Activated CD4-positive, alpha-beta T cell treated with anti-CD3 and anti-CD28 coated beads for 36 hours (primary cell): ENCODE measurements at regions of chr19 and their contacts with region 1.

Region 1: DNA sequence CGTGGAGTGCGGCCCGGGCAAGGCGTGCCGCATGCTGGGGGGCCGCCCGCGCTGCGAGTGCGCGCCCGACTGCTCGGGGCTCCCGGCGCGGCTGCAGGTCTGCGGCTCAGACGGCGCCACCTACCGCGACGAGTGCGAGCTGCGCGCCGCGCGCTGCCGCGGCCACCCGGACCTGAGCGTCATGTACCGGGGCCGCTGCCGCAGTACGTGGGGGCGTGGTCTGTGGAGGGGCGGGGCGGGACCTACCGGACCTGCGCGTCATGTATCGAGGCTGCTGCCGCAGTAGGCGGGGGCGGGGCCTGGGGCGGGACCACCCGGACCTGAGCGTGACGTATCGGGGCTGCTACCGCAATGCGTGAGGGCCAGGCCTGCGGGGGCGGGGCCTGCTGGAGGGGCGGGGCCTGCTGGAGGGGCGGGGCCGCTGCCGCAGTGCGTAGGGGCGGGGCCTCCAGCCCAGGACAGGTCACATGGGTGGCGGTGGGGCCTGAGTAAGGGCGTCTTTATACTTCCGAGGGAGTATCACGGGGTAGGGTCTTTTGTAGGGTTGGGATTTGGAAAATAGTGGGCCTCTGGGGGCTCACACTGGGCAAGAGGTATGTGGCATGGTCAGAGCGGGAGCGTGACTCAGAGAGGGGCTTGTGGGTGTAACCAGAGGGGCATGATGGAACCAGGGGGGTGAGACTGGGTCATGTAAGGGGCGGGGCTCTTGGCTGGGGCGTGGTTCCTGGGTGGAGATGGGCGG is 4.3 kb downstream of the FSTL3 start:
- DNase-seq: peak; percentile 100
- ATAC-seq: peak; percentile 81
- H3K4me3 Mint-ChIP-seq: peak overlapping the region; percentile 70
- H3K27ac Mint-ChIP-seq: peak overlapping the region; percentile 94
- H3K4me1 Mint-ChIP-seq: peaks cover 3% of the 10 kb centered on the region
- H3K27me3 Mint-ChIP-seq: peaks cover 4% of the 10 kb centered on the region

Region 2: GRCh38 chr19:572140-572742 is 108.2 kb before region 1 on chr19 and contains the start of gene BSG:
- CTCF ChIA-PET with region 1: no interaction called
- POLR2A ChIA-PET with region 1: no interaction called
- intact Hi-C with region 1: loop called in 1 of 2 experiments (anchors 1 kb)
- DNase-seq: peak; percentile 99
- ATAC-seq: peak; percentile 87
- H3K4me3 Mint-ChIP-seq: peak within 1 kb of the TSS; percentile 90
- H3K27ac Mint-ChIP-seq: peak within 1 kb of the TSS; percentile 95
- H3K4me1 Mint-ChIP-seq: peaks cover 36% of the 10 kb centered on the region
- H3K27me3 Mint-ChIP-seq: no peaks in the 10 kb centered on the region
- total RNA-seq, gene BSG: 165 to 175 TPM

Region 3: GRCh38 chr19:645641-646478 is 34.6 kb before region 1 on chr19:
- CTCF ChIA-PET with region 1: no interaction called
- POLR2A ChIA-PET with region 1: no interaction called
- intact Hi-C with region 1: no loop called
- DNase-seq: no peak
- ATAC-seq: peak; percentile 11
- H3K4me3 Mint-ChIP-seq: no peak overlapping the region
- H3K27ac Mint-ChIP-seq: no peak overlapping the region
- H3K4me1 Mint-ChIP-seq: no peaks in the 10 kb centered on the region
- H3K27me3 Mint-ChIP-seq: no peaks in the 10 kb centered on the region

Region 4: DNA sequence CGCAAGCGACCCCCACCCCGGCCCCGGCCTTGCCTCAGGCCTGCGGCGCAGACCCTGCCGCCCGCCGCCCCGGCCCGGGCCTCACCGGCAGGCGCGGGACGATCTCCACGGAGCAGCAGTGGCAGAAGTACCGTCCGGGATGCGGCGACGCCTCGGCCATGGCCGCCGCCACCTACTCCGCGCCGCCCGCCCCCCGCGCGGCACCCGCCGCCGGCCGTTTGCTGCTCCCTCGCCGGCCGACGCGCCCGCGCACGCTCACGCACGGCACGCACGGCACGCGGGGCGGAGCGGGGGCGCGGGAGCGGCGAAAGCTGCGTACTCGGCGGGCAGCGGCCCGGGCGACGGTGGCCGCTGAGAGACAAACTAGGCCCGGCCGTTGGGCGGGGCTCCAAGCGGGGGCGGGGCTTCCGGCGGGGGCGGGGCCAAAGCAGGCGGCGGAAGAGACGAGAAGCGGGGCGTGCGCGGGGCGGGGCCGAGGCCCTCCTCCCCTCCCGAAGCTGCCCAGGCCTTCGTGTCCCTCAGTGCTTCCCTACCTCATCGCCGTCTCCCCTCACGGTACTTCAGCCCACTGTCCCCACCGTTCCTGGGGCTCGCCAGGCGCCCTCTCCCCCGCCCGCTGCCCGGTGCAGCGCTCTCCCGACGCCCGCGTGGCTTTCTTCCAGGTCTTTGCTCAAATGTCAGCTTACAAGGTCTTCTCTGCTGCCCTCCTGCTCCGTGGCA is 17.3 kb before region 1 on chr19 and contains the start of gene RNF126:
- CTCF ChIA-PET with region 1: interaction called, 11 read pairs
- POLR2A ChIA-PET with region 1: interaction called, 7 read pairs
- intact Hi-C with region 1: loop called (anchors 1 kb)
- DNase-seq: peak; percentile 98
- ATAC-seq: peak; percentile 49
- H3K4me3 Mint-ChIP-seq: peak within 1 kb of the TSS; percentile 96
- H3K27ac Mint-ChIP-seq: peak within 1 kb of the TSS; percentile 95
- H3K4me1 Mint-ChIP-seq: peaks cover 37% of the 10 kb centered on the region
- H3K27me3 Mint-ChIP-seq: no peaks in the 10 kb centered on the region
- total RNA-seq, gene RNF126: 83.0 to 91.3 TPM

Region 5: DNA sequence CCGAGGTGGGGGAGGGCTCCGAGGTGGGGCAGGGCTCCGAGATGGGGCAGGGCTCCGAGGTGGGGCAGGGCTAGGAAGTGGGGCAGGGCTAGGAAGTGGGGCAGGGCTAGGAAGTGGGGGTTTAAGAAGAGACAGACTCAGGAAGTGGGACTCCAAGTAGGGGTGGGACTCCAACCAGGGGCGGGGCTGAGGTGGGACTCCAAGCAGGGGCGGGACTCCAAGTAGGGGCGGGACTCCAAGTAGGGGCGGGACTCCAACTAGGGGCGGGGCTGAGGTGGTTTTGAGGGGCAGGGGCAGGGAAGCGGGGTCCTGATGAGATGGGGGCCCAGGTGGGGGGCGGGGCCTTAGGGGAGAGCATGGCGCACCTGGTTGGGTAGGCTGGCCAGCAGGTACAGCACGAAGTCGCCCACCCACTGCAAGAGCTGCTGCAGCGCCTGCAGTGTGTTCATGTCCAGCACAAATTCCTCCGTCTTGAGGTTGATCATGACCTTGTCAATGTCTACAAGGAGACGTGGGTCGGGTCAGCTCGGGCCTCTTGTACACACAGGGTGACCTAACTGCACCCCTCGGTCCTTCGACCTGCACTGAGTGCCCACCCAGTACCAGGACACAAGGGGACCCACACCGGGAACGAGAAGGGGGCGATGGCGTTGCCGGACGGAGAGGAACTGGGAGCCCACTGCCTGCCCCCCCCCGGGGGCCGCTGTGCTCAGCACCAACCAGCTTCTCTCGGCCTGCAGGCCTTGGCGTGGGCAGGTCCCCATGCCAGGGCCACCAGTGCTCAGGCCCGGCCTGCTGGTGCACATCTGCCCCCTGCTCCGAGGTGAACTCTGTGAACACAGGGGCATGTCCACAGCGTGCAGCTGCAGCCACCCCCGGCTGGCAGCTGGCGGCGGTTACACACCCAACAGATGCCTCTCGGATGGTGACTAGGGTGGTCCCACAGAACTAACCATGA is 192.9 kb after region 1 on chr19:
- CTCF ChIA-PET with region 1: no interaction called
- POLR2A ChIA-PET with region 1: no interaction called
- intact Hi-C with region 1: loop called in 1 of 2 experiments (anchors 1 kb)
- DNase-seq: peak; percentile 85
- ATAC-seq: peak; percentile 89
- H3K4me3 Mint-ChIP-seq: no peak overlapping the region
- H3K27ac Mint-ChIP-seq: no peak overlapping the region
- H3K4me1 Mint-ChIP-seq: peaks cover 12% of the 10 kb centered on the region
- H3K27me3 Mint-ChIP-seq: no peaks in the 10 kb centered on the region

Region 6: DNA sequence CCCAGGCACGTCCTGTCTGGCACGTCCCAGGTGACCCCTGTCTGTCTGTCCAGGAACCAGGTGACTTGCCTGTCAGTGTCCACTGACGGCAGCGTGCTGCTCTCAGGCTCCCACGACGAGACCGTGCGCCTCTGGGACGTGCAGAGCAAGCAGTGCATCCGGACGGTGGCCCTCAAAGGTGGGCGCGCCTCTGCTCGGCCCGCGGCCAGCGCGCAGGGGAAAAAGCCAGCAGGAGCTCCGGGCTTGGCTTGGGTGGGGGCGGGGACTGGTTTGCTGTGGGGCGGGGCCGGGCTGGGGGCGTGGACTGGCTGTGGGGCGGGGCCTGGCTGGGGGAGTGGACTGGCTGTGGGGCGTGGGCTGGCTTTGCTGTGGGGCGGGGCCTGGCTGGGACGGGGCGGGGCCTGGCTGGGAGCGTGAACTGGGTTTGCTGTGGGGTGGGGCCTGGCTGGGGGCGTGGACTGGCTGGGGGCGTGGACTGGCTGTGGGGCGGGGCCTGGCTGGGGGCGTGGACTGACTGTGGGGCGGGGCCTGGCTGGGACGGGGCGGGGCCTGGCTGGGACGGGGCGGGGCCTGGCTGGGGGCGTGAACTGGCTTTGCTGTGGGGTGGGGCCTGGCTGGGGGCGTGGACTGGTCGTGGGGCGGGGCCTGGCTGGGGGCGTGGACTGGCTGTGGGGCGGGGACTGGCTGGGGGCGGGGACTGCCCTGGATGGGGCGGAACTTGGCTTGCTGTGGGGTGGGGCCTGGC is 310.9 kb after region 1 on chr19:
- CTCF ChIA-PET with region 1: no interaction called
- POLR2A ChIA-PET with region 1: no interaction called
- intact Hi-C with region 1: loop called in 1 of 2 experiments (anchors 1 kb)
- DNase-seq: peak; percentile 91
- ATAC-seq: peak; percentile 80
- H3K4me3 Mint-ChIP-seq: no peak overlapping the region
- H3K27ac Mint-ChIP-seq: no peak overlapping the region
- H3K4me1 Mint-ChIP-seq: peaks cover 2% of the 10 kb centered on the region
- H3K27me3 Mint-ChIP-seq: no peaks in the 10 kb centered on the region

Region 7: DNA sequence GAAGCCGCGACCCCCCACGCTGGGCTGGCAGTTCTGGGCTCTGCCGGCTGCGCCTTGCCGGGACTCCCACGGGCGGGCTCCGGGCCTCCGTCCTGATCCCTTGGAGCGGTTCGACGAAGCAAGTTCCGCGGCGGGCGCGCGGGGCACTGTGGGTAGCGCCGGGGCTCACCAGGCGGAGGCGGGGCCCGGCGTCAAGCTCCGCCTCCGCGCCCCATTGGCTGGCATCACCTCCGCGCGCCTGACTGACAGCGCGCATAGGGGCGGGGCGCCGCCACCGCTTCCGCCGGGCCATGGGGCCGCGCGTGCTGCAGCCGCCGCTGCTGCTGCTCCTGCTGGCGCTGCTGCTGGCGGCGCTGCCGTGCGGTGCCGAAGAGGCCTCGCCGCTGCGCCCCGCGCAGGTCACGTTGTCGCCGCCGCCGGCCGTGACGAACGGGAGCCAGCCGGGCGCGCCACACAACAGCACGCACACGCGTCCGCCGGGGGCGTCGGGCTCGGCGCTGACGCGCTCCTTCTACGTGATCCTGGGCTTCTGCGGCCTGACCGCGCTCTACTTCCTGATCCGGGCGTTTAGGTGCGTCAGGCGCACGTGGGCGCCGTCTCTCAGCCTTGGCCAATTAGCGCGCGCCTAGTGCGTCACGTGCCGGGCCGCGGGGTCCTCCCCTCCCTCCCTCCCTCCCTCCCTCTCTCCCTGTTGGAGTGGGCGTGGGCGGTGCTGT is 595.0 kb after region 1 on chr19 and contains the start of gene FAM174C:
- CTCF ChIA-PET with region 1: no interaction called
- POLR2A ChIA-PET with region 1: no interaction called
- intact Hi-C with region 1: loop called in 1 of 2 experiments (anchors 1 kb)
- DNase-seq: peak; percentile 99
- ATAC-seq: peak; percentile 82
- H3K4me3 Mint-ChIP-seq: peak within 1 kb of the TSS; percentile 83
- H3K27ac Mint-ChIP-seq: peak within 1 kb of the TSS; percentile 95
- H3K4me1 Mint-ChIP-seq: peaks cover 54% of the 10 kb centered on the region
- H3K27me3 Mint-ChIP-seq: no peaks in the 10 kb centered on the region
- total RNA-seq, gene FAM174C: 75.3 to 88.3 TPM